ENCODE measurements at regions of chr2 and their contacts with region 1.

Region 1: GRCh38 chr2:205245652-205246051 is 436.6 kb upstream of the NRP2 start:
- DNase-seq: no peak
- ATAC-seq: peak; percentile 73
- H3K4me3 ChIP-seq: no peak overlapping the region
- H3K27ac ChIP-seq: no peak overlapping the region
- H3K4me1 ChIP-seq: no peaks in the 10 kb centered on the region
- H3K27me3 ChIP-seq: no peaks in the 10 kb centered on the region

Region 2: DNA sequence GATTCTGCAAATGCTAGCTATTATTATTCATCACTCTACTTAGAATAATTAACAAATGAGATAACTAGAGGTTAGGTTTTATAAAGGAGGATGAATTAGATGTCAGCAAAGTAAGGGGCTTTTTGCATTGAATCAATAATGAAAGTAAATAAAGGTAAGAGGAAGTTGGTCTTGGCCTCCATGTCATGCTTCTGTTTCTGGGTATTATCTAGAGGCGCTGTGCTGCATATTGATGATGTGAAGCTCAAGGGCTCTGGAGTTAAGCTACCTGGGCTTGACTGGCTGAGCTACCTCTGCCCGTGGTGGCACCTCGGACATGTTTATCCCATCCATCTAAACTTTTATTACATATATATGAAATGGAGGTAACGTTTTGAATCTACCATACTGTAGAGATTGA is 349.5 kb before region 1 on chr2:
- intact Hi-C with region 1: loop called in 1 of 2 experiments (anchors 5 kb)
- DNase-seq: no peak
- ATAC-seq: no peak
- H3K4me3 ChIP-seq: no peak overlapping the region
- H3K27ac ChIP-seq: no peak overlapping the region
- H3K4me1 ChIP-seq: no peaks in the 10 kb centered on the region
- H3K27me3 ChIP-seq: no peaks in the 10 kb centered on the region

Region 3: DNA sequence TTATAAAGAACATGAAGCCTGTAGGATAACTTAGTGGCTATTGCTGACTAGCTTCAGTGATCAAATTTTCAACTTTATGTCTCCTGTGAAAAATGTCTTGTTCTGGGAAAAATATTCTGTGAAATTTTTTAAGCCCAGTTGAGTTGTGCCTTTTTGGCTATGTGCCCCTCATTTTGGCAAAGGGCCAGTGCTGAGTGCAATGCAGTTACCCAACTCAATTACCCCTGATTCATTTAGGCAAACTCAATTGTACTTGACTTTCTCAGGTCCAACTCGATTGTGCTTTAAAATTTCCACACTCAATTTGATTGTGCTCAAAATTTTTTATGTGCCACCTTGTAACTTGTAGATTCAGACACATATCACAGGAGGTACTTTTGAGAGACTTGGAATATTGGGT is 112.1 kb before region 1 on chr2:
- intact Hi-C with region 1: no loop called
- DNase-seq: peak; percentile 52 to 76
- ATAC-seq: no peak
- H3K4me3 ChIP-seq: no peak overlapping the region
- H3K27ac ChIP-seq: no peak overlapping the region
- H3K4me1 ChIP-seq: no peaks in the 10 kb centered on the region
- H3K27me3 ChIP-seq: no peaks in the 10 kb centered on the region

Region 4: GRCh38 chr2:205343103-205343502 is 97.5 kb after region 1 on chr2:
- intact Hi-C with region 1: no loop called
- DNase-seq: no peak
- ATAC-seq: no peak
- H3K4me3 ChIP-seq: no peak overlapping the region
- H3K27ac ChIP-seq: no peak overlapping the region
- H3K4me1 ChIP-seq: no peaks in the 10 kb centered on the region
- H3K27me3 ChIP-seq: no peaks in the 10 kb centered on the region

Measured in aorta (tissue), 5 donors.